PC-9 (cell line): ENCODE measurements at regions of chr20 and their contacts with region 1.

Region 1: GRCh38 chr20:50238086-50238800 is 47.6 kb downstream of the CEBPB start:
- DNase-seq: no peak
- H3K4me3 ChIP-seq: no peak overlapping the region
- H3K27ac ChIP-seq: peak overlapping the region; percentile 67
- H3K4me1 ChIP-seq: peaks cover 83% of the 10 kb centered on the region
- H3K27me3 ChIP-seq: no peaks in the 10 kb centered on the region
- CTCF ChIP-seq: no peak

Region 2: GRCh38 chr20:50223294-50224005 is 14.8 kb before region 1 on chr20:
- CTCF ChIA-PET with region 1: interaction called, 14 read pairs
- POLR2A ChIA-PET with region 1: no interaction called
- intact Hi-C with region 1: no loop called
- DNase-seq: no peak
- H3K4me3 ChIP-seq: no peak overlapping the region
- H3K27ac ChIP-seq: peak overlapping the region; percentile 73
- H3K4me1 ChIP-seq: peaks cover 88% of the 10 kb centered on the region
- H3K27me3 ChIP-seq: no peaks in the 10 kb centered on the region
- CTCF ChIP-seq: no peak